Stomach (tissue), 19 donors: ENCODE measurements at regions of chr2 and their contacts with region 1.

Region 1: DNA sequence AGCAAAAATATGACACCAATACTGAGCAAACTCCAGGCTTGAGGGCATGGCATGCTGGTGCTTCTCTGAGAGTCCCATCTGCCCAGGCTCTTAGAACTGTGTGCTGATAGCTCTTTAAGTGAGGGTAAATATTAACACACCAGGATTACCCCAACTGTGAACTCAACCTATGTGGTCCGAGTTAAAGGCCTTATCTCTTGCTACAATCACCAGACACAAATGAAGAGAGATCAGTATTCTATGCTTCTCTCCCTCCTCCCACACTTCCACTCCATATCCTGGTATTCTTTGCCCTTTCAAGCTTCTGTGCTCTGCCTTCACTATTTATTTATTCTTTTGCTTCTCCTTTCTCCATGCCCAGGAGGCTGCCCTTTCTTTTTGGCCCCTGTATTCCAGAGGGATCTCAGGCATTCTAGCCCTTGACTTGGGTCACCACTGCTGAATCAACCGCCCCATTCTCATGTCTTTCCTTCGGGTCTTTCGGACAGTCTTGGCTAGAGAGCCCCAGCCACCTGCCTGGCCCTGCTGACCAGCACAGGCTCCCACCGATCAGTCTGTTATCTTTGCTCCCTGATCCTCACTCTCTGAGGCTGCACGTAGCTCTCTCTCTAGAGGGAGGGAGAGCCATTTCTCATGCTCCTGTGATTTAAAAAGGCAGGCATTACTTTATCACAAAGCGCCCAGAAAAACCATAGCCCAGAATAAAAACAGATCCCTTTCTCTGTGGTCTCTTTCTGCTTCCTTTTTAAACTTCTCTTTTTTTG is 17.2 kb upstream of the HK2 start:
- DNase-seq: peak in 1 of 2 donors; percentile 26
- H3K4me3 ChIP-seq: no peak overlapping the region
- H3K27ac ChIP-seq: peak overlapping the region in 2 of 5 donors; percentile 46 to 50
- H3K4me1 ChIP-seq: peaks cover 0 to 9% (median 4%) of the 10 kb centered on the region in 4 donors
- H3K27me3 ChIP-seq: no peaks in the 10 kb centered on the region
- CTCF ChIP-seq: no peak
- EP300 ChIP-seq: no peak
- POLR2A ChIP-seq: no peak

Region 2: DNA sequence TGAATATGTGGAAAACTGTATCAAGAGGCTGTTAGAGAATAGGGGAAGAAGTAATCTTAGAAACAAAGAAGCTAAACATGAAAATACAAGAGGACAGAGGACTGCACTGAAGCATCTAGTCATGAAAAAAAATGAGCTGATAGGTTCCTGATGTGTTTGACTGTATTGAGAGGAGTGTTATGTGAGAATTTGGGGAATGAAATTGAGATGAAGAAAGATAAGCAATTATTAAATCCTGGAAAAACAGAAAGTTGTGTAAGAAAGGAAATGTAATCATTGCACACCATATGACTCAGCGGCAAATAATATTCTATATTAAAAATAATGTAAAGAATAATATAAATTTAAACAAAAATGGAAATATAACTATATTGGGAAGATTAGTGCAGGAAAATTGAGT is 91.4 kb before region 1 on chr2:
- intact Hi-C with region 1: loop called (anchors 10 kb)
- DNase-seq: no peak
- H3K4me3 ChIP-seq: no peak overlapping the region
- H3K27ac ChIP-seq: no peak overlapping the region
- H3K4me1 ChIP-seq: no peaks in the 10 kb centered on the region
- H3K27me3 ChIP-seq: peaks cover 0 to 3% (median 0%) of the 10 kb centered on the region in 3 donors
- CTCF ChIP-seq: no peak
- EP300 ChIP-seq: no peak
- POLR2A ChIP-seq: no peak